CD4-positive, alpha-beta T cell (primary cell): ENCODE measurements at regions of chr1 and their contacts with region 1.

Region 1: GRCh38 chr1:109984456-109985275 is at the start of gene AHCYL1:
- DNase-seq: peak; percentile 98 to 100 (median 99)
- ATAC-seq: peak; percentile 99
- H3K4me3 ChIP-seq: peak within 1 kb of the TSS; percentile 90
- H3K4me3 Mint-ChIP-seq: peak within 1 kb of the TSS; percentile 99
- H3K27ac ChIP-seq: peak within 1 kb of the TSS; percentile 71 to 80
- H3K27ac Mint-ChIP-seq: peak within 1 kb of the TSS; percentile 97
- H3K4me1 ChIP-seq: peaks cover 29% of the 10 kb centered on the region
- H3K4me1 Mint-ChIP-seq: peaks cover 51% of the 10 kb centered on the region
- H3K27me3 ChIP-seq: no peaks in the 10 kb centered on the region
- H3K27me3 Mint-ChIP-seq: no peaks in the 10 kb centered on the region
- CTCF ChIP-seq: peak; percentile 92
- total RNA-seq, gene AHCYL1: 6.9 to 8.4 TPM

Region 2: GRCh38 chr1:108746372-108747205 is 1238.1 kb before region 1 on chr1 and contains the start of gene STXBP3:
- CTCF ChIA-PET with region 1: no interaction called
- POLR2A ChIA-PET with region 1: no interaction called
- intact Hi-C with region 1: loop called in 1 of 2 experiments (anchors 10 kb)
- DNase-seq: peak; percentile 99 to 100 (median 100)
- ATAC-seq: peak; percentile 95
- H3K4me3 ChIP-seq: peak within 1 kb of the TSS; percentile 92
- H3K4me3 Mint-ChIP-seq: peak within 1 kb of the TSS; percentile 97
- H3K27ac ChIP-seq: peak within 1 kb of the TSS; percentile 90 to 95
- H3K27ac Mint-ChIP-seq: peak within 1 kb of the TSS; percentile 91
- H3K4me1 ChIP-seq: peaks cover 14% of the 10 kb centered on the region
- H3K4me1 Mint-ChIP-seq: peaks cover 44% of the 10 kb centered on the region
- H3K27me3 ChIP-seq: no peaks in the 10 kb centered on the region
- H3K27me3 Mint-ChIP-seq: no peaks in the 10 kb centered on the region
- CTCF ChIP-seq: peak; percentile 92
- total RNA-seq, gene STXBP3: 41.6 to 50.5 TPM

Region 3: GRCh38 chr1:109426278-109427170 is 558.1 kb before region 1 on chr1 and contains the start of gene PSMA5:
- CTCF ChIA-PET with region 1: interaction called, 3 read pairs
- POLR2A ChIA-PET with region 1: interaction called, 4 read pairs
- intact Hi-C with region 1: loop called in 1 of 2 experiments (anchors 5 kb)
- DNase-seq: peak; percentile 87 to 99 (median 92)
- ATAC-seq: peak; percentile 91
- H3K4me3 ChIP-seq: peak within 1 kb of the TSS; percentile 98
- H3K4me3 Mint-ChIP-seq: peak within 1 kb of the TSS; percentile 98
- H3K27ac ChIP-seq: peak within 1 kb of the TSS; percentile 91 to 95
- H3K27ac Mint-ChIP-seq: peak within 1 kb of the TSS; percentile 98
- H3K4me1 ChIP-seq: peaks cover 33% of the 10 kb centered on the region
- H3K4me1 Mint-ChIP-seq: peaks cover 52% of the 10 kb centered on the region
- H3K27me3 ChIP-seq: no peaks in the 10 kb centered on the region
- H3K27me3 Mint-ChIP-seq: no peaks in the 10 kb centered on the region
- CTCF ChIP-seq: no peak
- total RNA-seq, gene PSMA5: 29.8 to 33.8 TPM

Region 4: DNA sequence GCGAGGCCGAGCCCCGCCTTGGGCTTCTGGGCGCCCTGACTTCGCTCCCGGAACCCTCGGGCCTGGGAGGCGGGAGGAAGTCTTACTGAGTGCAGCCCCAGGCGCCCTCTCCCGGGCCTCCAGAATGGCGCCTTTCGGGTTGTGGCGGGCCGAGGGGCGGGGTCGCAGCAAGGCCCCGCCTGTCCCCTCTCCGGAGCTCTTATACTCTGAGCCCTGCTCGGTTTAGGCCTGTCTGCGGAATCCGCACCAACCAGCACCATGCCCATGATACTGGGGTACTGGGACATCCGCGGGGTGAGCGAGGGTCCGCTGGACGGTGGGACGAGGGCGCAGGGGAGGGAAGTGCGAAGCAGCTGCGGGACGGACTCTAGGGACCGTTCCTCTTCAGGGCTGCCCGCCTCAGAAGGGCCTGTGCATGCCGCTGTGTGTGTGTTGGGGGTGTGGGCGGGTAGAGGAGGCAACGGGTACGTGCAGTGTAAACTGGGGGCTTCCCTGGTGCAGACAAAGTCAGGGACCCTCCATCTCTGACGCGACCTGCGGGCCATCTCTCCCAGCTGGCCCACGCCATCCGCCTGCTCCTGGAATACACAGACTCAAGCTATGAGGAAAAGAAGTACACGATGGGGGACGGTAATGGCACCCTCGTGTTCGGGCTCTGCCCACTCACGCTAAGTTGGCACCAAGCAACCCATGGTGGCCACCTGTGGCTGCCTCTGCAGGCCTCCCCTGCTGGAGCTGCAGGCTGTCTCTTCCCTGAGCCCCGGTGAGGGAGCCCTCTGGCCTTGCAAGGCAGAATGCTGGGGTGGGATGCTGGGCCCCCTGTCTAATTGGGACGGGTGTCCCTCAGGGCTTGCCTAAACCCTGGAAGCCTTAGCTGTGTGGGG is 296.8 kb before region 1 on chr1 and contains the start of gene GSTM1:
- CTCF ChIA-PET with region 1: no interaction called
- POLR2A ChIA-PET with region 1: interaction called, 4 read pairs
- intact Hi-C with region 1: loop called in 1 of 2 experiments (anchors 5 kb)
- DNase-seq: peak in 9 of 14 experiments; percentile 59 to 87 (median 79)
- ATAC-seq: peak; percentile 99
- H3K4me3 ChIP-seq: peak within 1 kb of the TSS; percentile 67
- H3K4me3 Mint-ChIP-seq: peak within 1 kb of the TSS; percentile 95
- H3K27ac ChIP-seq: no peak within 1 kb of the TSS
- H3K27ac Mint-ChIP-seq: peak within 1 kb of the TSS; percentile 86
- H3K4me1 ChIP-seq: no peaks in the 10 kb centered on the region
- H3K4me1 Mint-ChIP-seq: peaks cover 23% of the 10 kb centered on the region
- H3K27me3 ChIP-seq: no peaks in the 10 kb centered on the region
- H3K27me3 Mint-ChIP-seq: no peaks in the 10 kb centered on the region
- CTCF ChIP-seq: peak; percentile 63
- total RNA-seq, gene GSTM1: 31.9 to 36.2 TPM

Region 5: GRCh38 chr1:109790735-109791494 is 193.8 kb before region 1 on chr1:
- CTCF ChIA-PET with region 1: interaction called, 14 read pairs
- POLR2A ChIA-PET with region 1: interaction called, 14 read pairs
- intact Hi-C with region 1: no loop called
- DNase-seq: peak; percentile 51 to 90 (median 70)
- ATAC-seq: peak; percentile 95
- H3K4me3 ChIP-seq: no peak overlapping the region
- H3K4me3 Mint-ChIP-seq: peak overlapping the region; percentile 48
- H3K27ac ChIP-seq: peak overlapping the region; percentile 32 to 69
- H3K27ac Mint-ChIP-seq: peak overlapping the region; percentile 66
- H3K4me1 ChIP-seq: peaks cover 81% of the 10 kb centered on the region
- H3K4me1 Mint-ChIP-seq: peaks cover 60% of the 10 kb centered on the region
- H3K27me3 ChIP-seq: no peaks in the 10 kb centered on the region
- H3K27me3 Mint-ChIP-seq: no peaks in the 10 kb centered on the region
- CTCF ChIP-seq: peak; percentile 76

Region 6: DNA sequence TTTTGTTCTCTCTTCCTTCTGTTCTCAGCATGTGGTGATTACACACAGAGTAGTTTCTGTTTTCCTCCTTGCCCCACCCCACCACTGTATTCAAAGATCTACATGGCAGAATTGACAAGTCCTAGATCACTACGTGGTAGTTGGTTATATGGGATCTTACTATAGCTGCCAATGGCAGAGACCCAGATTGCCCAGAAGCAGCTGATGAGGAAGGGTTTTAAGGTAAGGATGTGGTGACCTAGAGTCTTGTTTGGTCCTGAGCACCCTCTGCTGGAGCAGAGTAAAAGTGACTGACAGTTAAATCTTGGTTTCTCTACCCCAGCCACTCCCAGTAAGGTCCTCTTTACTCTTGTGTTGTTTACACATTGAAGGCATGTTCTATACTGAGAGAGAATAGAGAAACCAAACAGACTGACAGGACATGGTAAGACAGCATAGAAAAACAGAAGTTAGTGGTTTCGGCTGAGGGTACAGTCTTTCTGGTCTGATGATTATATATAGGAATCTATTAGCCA is 26.9 kb after region 1 on chr1:
- CTCF ChIA-PET with region 1: interaction called, 11 read pairs
- POLR2A ChIA-PET with region 1: interaction called, 6 read pairs
- intact Hi-C with region 1: no loop called
- DNase-seq: peak in 6 of 14 experiments; percentile 9 to 69 (median 42)
- ATAC-seq: peak; percentile 96
- H3K4me3 ChIP-seq: no peak overlapping the region
- H3K4me3 Mint-ChIP-seq: no peak overlapping the region
- H3K27ac ChIP-seq: no peak overlapping the region
- H3K27ac Mint-ChIP-seq: peak overlapping the region; percentile 56
- H3K4me1 ChIP-seq: no peaks in the 10 kb centered on the region
- H3K4me1 Mint-ChIP-seq: peaks cover 14% of the 10 kb centered on the region
- H3K27me3 ChIP-seq: no peaks in the 10 kb centered on the region
- H3K27me3 Mint-ChIP-seq: no peaks in the 10 kb centered on the region
- CTCF ChIP-seq: no peak